Endothelial cell of umbilical vein (primary cell): ENCODE measurements at regions of chr1 and their contacts with region 1.

Region 1: DNA sequence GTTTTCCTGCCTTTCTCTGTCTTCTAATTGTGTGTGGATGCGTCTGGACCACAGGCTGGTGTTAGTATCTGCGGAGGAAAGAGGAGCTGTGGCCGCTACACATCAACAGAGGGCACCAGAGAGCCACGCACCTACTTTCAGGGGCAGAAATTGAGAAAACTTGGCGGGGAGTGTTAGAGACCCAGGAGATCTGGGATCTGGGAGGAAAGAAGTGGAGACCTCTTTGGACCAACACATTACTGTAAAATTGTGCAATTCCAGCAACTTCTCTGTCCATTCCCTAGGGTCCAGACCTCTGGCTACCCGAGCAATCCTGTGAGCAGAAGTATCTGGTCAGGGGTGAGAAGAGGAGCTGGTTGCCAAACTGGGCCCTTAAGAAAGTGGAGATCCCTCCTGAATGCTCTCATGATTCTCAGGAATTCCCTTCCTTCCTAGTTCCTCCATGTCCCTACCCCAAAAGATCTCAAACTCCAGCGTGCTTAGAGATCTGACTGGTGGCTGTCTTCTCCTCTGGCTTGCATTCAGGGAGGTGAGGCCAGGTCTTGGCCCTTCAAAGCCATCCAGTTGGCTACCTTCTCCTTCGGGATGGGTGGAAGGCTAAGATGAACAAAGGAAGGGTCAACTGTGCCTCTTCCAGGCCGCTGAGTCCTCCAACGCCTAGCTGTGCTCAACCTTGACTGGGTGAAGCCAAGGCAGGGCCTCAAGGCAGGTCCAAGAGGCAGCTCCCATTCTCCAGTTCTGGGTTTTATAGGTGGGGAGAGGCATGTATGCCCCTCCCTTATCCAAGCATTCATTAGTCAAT is 1.2 kb upstream of the KIRREL1 start:
- DNase-seq: peak; percentile 73
- H3K4me3 ChIP-seq: no peak overlapping the region
- H3K27ac ChIP-seq: no peak overlapping the region
- H3K4me1 ChIP-seq: peaks cover 19% of the 10 kb centered on the region
- H3K27me3 ChIP-seq: peaks cover 14 to 21% of the 10 kb centered on the region in 2 experiments
- CTCF ChIP-seq: peak; percentile 93 to 94
- POLR2A ChIP-seq: no peak

Region 2: DNA sequence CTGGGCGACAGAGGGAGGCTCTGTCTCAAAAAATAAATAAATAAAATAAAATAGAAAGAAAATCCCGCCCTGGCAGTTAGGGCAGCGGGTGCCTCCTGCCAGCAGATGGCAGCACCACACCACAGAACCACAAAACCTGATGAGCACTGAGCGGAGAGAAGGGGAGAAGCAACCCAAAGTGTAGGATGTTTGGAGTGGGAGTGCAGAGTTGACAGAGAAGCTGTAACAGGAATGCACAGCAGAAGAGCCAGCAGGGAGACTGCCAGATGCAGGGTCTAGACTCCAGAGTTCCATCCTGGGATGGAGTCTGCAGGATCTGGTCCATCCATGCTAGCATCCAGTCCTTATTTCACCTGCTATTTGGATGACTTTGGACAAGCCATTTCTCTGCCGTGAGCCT is 28.5 kb before region 1 on chr1:
- CTCF ChIA-PET with region 1: interaction called, 74 read pairs
- POLR2A ChIA-PET with region 1: no interaction called
- dilution Hi-C with region 1: no loop called
- intact Hi-C with region 1: no loop called
- DNase-seq: peak; percentile 63
- H3K4me3 ChIP-seq: no peak overlapping the region
- H3K27ac ChIP-seq: no peak overlapping the region
- H3K4me1 ChIP-seq: peaks cover 7% of the 10 kb centered on the region
- H3K27me3 ChIP-seq: peaks cover 10 to 18% of the 10 kb centered on the region in 2 experiments
- CTCF ChIP-seq: peak; percentile 76 to 78
- POLR2A ChIP-seq: no peak

Region 3: DNA sequence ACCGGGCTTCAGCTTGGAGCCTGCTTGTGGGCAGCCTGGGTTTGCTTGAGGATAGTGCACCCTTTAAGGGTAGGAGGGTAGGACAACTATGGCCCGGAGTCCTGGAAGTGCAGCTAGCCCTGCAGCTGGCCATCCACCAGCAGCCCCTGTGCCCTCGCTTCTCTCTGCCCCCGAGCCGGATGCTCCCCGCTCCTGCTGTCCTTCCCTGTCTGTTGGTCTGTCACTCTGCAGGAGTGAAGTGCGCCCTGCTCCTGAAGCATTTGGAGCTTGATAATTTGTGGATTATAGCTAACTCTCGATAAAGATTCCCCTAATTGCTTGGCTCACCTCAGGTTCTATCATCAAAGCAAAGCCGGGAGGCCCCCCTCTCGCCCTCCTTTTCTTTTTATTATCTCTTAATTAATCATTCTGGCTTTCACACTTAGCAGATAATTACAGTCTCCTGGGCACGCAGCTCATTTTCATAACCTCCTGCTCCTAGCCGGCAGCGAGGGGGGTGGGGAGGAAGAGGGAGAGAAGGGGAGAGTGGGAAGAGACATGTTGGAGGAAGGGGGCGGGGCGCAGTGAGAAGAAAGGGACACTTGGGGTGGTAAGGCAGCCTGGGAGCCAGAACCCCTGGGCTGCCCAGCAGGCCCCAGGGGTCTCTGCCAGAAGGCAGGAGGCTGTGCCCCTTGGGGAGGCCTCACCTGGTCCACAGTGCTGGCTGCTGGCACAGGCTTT is 15.6 kb after region 1 on chr1:
- CTCF ChIA-PET with region 1: interaction called, 23 read pairs
- POLR2A ChIA-PET with region 1: interaction called, 3 read pairs
- dilution Hi-C with region 1: no loop called
- intact Hi-C with region 1: loop called (anchors 2 kb)
- DNase-seq: peak; percentile 36
- H3K4me3 ChIP-seq: no peak overlapping the region
- H3K27ac ChIP-seq: peak overlapping the region; percentile 87
- H3K4me1 ChIP-seq: peaks cover 60% of the 10 kb centered on the region
- H3K27me3 ChIP-seq: no peaks in the 10 kb centered on the region
- CTCF ChIP-seq: no peak
- POLR2A ChIP-seq: no peak

Region 4: GRCh38 chr1:158035976-158036583 is 43.8 kb after region 1 on chr1:
- CTCF ChIA-PET with region 1: interaction called, 264 read pairs
- POLR2A ChIA-PET with region 1: interaction called, 3 read pairs
- dilution Hi-C with region 1: no loop called
- intact Hi-C with region 1: loop called (anchors 1 kb)
- DNase-seq: peak; percentile 78
- H3K4me3 ChIP-seq: no peak overlapping the region
- H3K27ac ChIP-seq: no peak overlapping the region
- H3K4me1 ChIP-seq: peaks cover 34% of the 10 kb centered on the region
- H3K27me3 ChIP-seq: no peaks in the 10 kb centered on the region
- CTCF ChIP-seq: peak; percentile 59 to 67
- POLR2A ChIP-seq: no peak

Region 5: DNA sequence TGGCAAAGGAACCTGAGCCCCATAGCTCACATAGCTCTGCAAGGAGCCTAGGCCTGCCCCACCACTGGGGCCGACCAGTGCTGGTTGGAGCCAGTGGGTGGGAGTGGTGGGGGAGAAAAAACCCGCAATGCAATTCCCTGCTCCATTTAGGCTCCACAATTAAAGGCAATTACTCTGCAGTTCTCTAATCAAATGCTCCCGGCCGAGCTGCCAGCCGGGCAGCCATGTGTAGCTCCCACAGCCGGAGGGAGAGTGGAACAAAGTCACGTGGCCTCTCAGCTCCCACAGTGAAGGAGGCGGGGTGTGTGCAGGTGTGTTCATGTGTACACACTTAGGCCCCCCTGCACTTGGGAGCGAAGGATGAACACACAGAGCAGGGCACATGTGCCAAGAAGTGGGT is 82.8 kb after region 1 on chr1:
- CTCF ChIA-PET with region 1: interaction called, 30 read pairs
- POLR2A ChIA-PET with region 1: no interaction called
- dilution Hi-C with region 1: no loop called
- intact Hi-C with region 1: no loop called
- DNase-seq: no peak
- H3K4me3 ChIP-seq: no peak overlapping the region
- H3K27ac ChIP-seq: no peak overlapping the region
- H3K4me1 ChIP-seq: no peaks in the 10 kb centered on the region
- H3K27me3 ChIP-seq: no peaks in the 10 kb centered on the region
- CTCF ChIP-seq: no peak
- POLR2A ChIP-seq: no peak

Region 6: GRCh38 chr1:158101927-158102326 is 109.7 kb after region 1 on chr1:
- CTCF ChIA-PET with region 1: interaction called, 68 read pairs
- POLR2A ChIA-PET with region 1: no interaction called
- dilution Hi-C with region 1: no loop called
- intact Hi-C with region 1: no loop called
- DNase-seq: peak; percentile 92
- H3K4me3 ChIP-seq: no peak overlapping the region
- H3K27ac ChIP-seq: peak overlapping the region; percentile 60
- H3K4me1 ChIP-seq: peaks cover 12% of the 10 kb centered on the region
- H3K27me3 ChIP-seq: peaks cover 26 to 30% of the 10 kb centered on the region in 2 experiments
- CTCF ChIP-seq: no peak
- POLR2A ChIP-seq: peak; percentile 35

Region 7: GRCh38 chr1:158124999-158125398 is 132.8 kb after region 1 on chr1:
- CTCF ChIA-PET with region 1: interaction called, 460 read pairs
- POLR2A ChIA-PET with region 1: interaction called, 7 read pairs
- dilution Hi-C with region 1: no loop called
- intact Hi-C with region 1: loop called (anchors 1 kb)
- DNase-seq: peak; percentile 93
- H3K4me3 ChIP-seq: no peak overlapping the region
- H3K27ac ChIP-seq: no peak overlapping the region
- H3K4me1 ChIP-seq: no peaks in the 10 kb centered on the region
- H3K27me3 ChIP-seq: peaks cover 16 to 23% of the 10 kb centered on the region in 2 experiments
- CTCF ChIP-seq: peak; percentile 84 to 89
- POLR2A ChIP-seq: no peak